Stomach (tissue), 19 donors: ENCODE measurements at regions of chr1 and their contacts with region 1.

Region 1: GRCh38 chr1:66764994-66765578 is 12.8 kb downstream of the DYNLT5 start:
- DNase-seq: peak; percentile 27 to 73
- H3K4me3 ChIP-seq: no peak overlapping the region
- H3K27ac ChIP-seq: no peak overlapping the region
- H3K4me1 ChIP-seq: no peaks in the 10 kb centered on the region
- H3K27me3 ChIP-seq: no peaks in the 10 kb centered on the region
- CTCF ChIP-seq: peak in 5 of 7 experiments; percentile 58 to 71 (median 67)
- EP300 ChIP-seq: no peak
- POLR2A ChIP-seq: no peak

Region 2: GRCh38 chr1:67159233-67159632 is 394.1 kb after region 1 on chr1:
- intact Hi-C with region 1: loop called (anchors 5 kb)
- DNase-seq: no peak
- H3K4me3 ChIP-seq: no peak overlapping the region
- H3K27ac ChIP-seq: no peak overlapping the region
- H3K4me1 ChIP-seq: no peaks in the 10 kb centered on the region
- H3K27me3 ChIP-seq: peaks cover 0 to 7% (median 0%) of the 10 kb centered on the region in 3 donors
- CTCF ChIP-seq: no peak
- EP300 ChIP-seq: no peak
- POLR2A ChIP-seq: no peak